GM10248 (cell line): ENCODE measurements at regions of chr4 and their contacts with region 1.

Region 1: DNA sequence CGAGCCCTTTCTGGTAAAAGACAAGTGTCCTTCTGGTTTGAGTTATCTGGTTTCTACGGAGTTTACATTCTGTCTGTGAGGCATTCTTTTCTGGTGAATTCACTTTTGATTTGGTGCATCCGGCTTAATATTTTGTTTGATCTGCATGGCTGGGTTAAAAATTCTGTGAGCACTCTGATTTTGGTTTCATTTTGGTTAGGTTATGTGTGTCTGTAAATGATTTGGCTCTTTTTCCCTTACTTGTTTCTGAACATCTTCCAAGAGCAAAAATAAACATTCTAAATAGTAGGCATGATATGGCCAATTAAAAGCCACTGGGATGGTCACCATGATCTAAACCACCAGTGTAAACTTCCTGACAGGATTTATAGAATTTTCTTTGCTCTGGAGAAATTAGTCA is 85.7 kb upstream of the PTPN13 start:
- DNase-seq: no peak
- CTCF ChIP-seq: no peak

Region 2: GRCh38 chr4:86522349-86522748 is 13.9 kb after region 1 on chr4:
- CTCF ChIA-PET with region 1: interaction called, 14 read pairs
- POLR2A ChIA-PET with region 1: no interaction called
- DNase-seq: no peak
- CTCF ChIP-seq: no peak